GM12878 (cell line): ENCODE measurements at regions of chr3 and their contacts with region 1.

Region 1: GRCh38 chr3:135895106-135895733 is 70.3 kb upstream of the PPP2R3A start:
- DNase-seq: peak; percentile 5
- ATAC-seq: peak; percentile 53; the same call in 1 of the 3 replicates
- H3K4me3 ChIP-seq: no peak overlapping the region
- H3K27ac ChIP-seq: no peak overlapping the region
- H3K4me1 ChIP-seq: no peaks in the 10 kb centered on the region
- H3K27me3 ChIP-seq: no peaks in the 10 kb centered on the region
- CTCF ChIP-seq: peak; percentile 73 to 88 (median 81)
- EP300 ChIP-seq: no peak
- POLR2A ChIP-seq: no peak
- RAD21 ChIP-seq: peak; percentile 78

Region 2: GRCh38 chr3:135503760-135504686 is 391.2 kb before region 1 on chr3:
- CTCF ChIA-PET with region 1: no interaction called
- POLR2A ChIA-PET with region 1: no interaction called
- RAD21 ChIA-PET with region 1: no interaction called
- SMC1A ChIA-PET with region 1: interaction called, 4 read pairs
- in situ Hi-C with region 1: no loop called
- intact Hi-C with region 1: loop called (anchors 10 kb)
- DNase-seq: peak; percentile 13
- ATAC-seq: peak; percentile 99
- H3K4me3 ChIP-seq: no peak overlapping the region
- H3K27ac ChIP-seq: no peak overlapping the region
- H3K4me1 ChIP-seq: no peaks in the 10 kb centered on the region
- H3K27me3 ChIP-seq: no peaks in the 10 kb centered on the region; a peak in 1 of 4 replicates
- CTCF ChIP-seq: peak; percentile 76 to 81 (median 80)
- EP300 ChIP-seq: no peak
- POLR2A ChIP-seq: no peak
- RAD21 ChIP-seq: peak; percentile 79

Region 3: GRCh38 chr3:135736740-135737139 is 158.5 kb before region 1 on chr3:
- CTCF ChIA-PET with region 1: no interaction called
- POLR2A ChIA-PET with region 1: no interaction called
- RAD21 ChIA-PET with region 1: no interaction called
- SMC1A ChIA-PET with region 1: no interaction called
- in situ Hi-C with region 1: no loop called
- intact Hi-C with region 1: loop called (anchors 1 kb)
- DNase-seq: no peak
- ATAC-seq: peak; percentile 67
- H3K4me3 ChIP-seq: no peak overlapping the region
- H3K27ac ChIP-seq: no peak overlapping the region
- H3K4me1 ChIP-seq: no peaks in the 10 kb centered on the region
- H3K27me3 ChIP-seq: 0 out of 4 replicates have a peak, but pooled peaks cover 0 to 3% of the 10 kb centered on the region in 2 experiments
- CTCF ChIP-seq: peak in 2 of 3 experiments; percentile 20 to 27; a peak in 3 of 6 replicates
- EP300 ChIP-seq: no peak
- POLR2A ChIP-seq: no peak
- RAD21 ChIP-seq: no peak